Common myeloid progenitor, CD34-positive (primary cell): ENCODE measurements at regions of chr10 and their contacts with region 1.

Region 1: GRCh38 chr10:118732245-118733165 is 22.3 kb downstream of the CACUL1 start:
- DNase-seq: no peak
- H3K4me3 ChIP-seq: no peak overlapping the region
- H3K27ac ChIP-seq: no peak overlapping the region
- H3K4me1 ChIP-seq: peaks cover 17 to 52% (median 39%) of the 10 kb centered on the region in 4 experiments
- H3K27me3 ChIP-seq: no peaks in the 10 kb centered on the region

Region 2: DNA sequence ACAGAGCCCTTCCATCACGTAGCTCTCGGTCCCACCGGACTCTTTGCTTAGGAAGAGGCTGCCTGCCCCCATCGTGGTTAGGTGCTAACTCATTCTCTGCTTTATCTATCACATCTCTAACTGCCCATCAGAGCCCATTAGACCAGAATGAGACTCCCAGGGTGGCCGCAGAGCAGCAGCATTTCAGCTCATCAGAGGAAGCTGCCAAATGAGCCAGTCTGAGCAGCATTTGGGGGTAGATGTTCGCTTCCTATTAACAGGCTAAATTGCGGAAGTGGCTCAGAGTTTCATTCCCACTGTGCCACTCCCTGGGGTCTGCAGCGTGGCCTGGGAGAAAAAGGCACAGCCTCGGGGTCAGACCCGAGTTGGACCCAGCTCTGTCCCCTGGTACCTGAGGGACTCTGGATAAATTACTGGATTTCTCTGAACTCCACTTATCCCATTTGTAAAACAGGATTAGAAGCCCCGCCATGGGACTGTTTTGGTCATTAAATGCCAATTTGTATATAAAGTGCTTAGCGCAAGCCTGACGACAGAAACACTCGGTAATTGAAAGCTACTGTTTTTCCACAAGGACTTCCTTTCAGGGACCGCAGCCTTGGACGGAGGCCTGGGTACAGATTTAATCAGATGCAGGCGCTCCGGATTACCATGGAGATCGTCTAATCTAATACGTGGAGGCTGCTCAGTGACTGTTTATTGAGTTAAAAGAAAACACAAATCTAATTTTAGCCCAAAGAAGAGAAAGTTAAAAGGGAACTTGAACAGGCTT is 63.3 kb before region 1 on chr10:
- CTCF ChIA-PET with region 1: no interaction called
- POLR2A ChIA-PET with region 1: no interaction called
- DNase-seq: peak; percentile 84 to 92 (median 90)
- H3K4me3 ChIP-seq: peak overlapping the region in 4 of 7 experiments; percentile 2 to 43 (median 20)
- H3K27ac ChIP-seq: no peak overlapping the region
- H3K4me1 ChIP-seq: peaks cover 0 to 25% (median 20%) of the 10 kb centered on the region in 4 experiments
- H3K27me3 ChIP-seq: peaks cover 0 to 64% (median 13%) of the 10 kb centered on the region in 5 experiments

Region 3: GRCh38 chr10:118698421-118698820 is 34.1 kb before region 1 on chr10:
- CTCF ChIA-PET with region 1: no interaction called
- POLR2A ChIA-PET with region 1: no interaction called
- DNase-seq: peak; percentile 29 to 79 (median 60)
- H3K4me3 ChIP-seq: no peak overlapping the region
- H3K27ac ChIP-seq: no peak overlapping the region
- H3K4me1 ChIP-seq: no peaks in the 10 kb centered on the region
- H3K27me3 ChIP-seq: no peaks in the 10 kb centered on the region

Region 4: DNA sequence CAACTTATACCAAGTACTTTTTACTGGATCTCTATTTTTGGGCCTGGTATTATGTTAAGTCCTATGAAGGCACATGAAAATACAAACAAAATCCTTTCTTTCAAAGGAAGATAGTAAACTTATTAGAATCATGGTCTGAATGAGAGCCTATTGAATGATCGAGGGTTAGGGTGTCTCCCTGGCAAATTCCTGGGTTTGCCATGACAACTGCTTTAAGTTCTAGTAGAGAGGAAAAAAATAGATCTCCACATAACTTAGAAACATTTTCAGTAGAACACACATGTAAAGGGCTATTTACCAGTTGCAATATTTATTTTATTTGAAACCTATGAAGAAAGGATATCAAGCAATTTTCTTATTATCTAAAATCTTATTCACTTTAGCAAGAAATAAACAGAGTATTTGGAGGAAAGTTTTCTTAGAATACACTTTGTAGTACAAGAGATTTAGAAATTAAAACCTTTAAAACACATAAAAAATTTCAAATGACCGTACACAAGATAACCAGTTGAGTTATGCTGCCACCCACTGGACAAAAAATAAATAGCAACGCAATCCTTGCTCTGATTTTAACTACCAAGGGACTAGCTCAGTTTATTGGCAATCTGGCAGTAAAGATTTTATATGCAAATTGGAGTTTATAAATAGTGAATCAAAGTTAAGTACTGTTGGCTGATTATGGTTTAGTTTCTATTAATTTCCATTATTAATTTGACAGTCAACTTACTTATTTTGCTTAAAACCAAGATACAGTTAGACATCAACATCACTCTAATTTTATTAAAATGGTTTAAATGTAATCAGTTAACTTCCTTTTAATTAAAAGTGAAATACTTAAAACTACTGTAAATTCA is 11.6 kb before region 1 on chr10:
- CTCF ChIA-PET with region 1: interaction called, 11 read pairs
- POLR2A ChIA-PET with region 1: no interaction called
- DNase-seq: peak; percentile 47 to 71 (median 56)
- H3K4me3 ChIP-seq: no peak overlapping the region
- H3K27ac ChIP-seq: no peak overlapping the region
- H3K4me1 ChIP-seq: no peaks in the 10 kb centered on the region
- H3K27me3 ChIP-seq: no peaks in the 10 kb centered on the region

Region 5: DNA sequence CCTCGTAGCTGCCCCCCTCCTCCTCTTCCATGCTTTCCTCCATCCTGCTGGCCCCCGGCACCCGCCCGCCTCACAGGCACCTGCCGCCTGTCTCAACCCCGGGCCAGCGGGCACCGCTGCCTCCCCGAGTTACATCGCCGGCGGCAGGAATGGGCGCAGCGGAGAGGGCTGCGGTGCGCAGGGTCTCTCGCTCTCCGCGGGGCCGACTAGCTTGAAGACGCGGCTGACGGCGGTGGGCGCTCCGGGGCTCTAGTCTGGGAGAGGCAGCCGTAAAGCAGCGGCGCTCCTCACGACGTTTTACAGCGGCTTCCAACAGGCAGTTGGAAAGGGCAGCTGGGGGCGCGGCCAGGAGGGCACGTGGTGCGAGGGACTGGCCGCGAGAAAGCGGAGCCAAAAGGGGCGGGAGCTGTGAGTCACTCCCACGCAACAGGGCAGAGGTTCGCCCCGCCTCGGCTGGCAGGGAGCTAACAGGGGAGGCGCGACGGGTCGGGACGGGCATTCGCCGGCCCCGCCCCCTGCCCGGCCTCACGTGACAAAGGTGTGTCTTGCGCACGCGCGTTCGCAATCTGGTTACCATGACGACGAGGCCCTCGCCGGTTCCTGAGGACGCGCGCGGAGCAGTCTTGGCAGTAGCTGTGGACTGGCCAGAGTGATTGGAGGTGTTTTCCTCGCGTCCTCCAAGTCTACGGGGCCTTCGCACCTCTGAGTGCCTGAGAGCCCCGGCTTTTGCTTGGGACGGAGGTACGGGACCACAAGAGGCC is 22.4 kb after region 1 on chr10 and contains the start of gene CACUL1:
- CTCF ChIA-PET with region 1: interaction called, 45 read pairs
- POLR2A ChIA-PET with region 1: no interaction called
- DNase-seq: peak; percentile 100
- H3K4me3 ChIP-seq: peak within 1 kb of the TSS; percentile 85 to 100 (median 94)
- H3K27ac ChIP-seq: peak within 1 kb of the TSS; percentile 79 to 88
- H3K4me1 ChIP-seq: peaks cover 20 to 28% (median 23%) of the 10 kb centered on the region in 4 experiments
- H3K27me3 ChIP-seq: peaks cover 0 to 5% (median 0%) of the 10 kb centered on the region in 5 experiments